ENCODE measurements at regions of chr15 and their contacts with region 1.

Region 1: DNA sequence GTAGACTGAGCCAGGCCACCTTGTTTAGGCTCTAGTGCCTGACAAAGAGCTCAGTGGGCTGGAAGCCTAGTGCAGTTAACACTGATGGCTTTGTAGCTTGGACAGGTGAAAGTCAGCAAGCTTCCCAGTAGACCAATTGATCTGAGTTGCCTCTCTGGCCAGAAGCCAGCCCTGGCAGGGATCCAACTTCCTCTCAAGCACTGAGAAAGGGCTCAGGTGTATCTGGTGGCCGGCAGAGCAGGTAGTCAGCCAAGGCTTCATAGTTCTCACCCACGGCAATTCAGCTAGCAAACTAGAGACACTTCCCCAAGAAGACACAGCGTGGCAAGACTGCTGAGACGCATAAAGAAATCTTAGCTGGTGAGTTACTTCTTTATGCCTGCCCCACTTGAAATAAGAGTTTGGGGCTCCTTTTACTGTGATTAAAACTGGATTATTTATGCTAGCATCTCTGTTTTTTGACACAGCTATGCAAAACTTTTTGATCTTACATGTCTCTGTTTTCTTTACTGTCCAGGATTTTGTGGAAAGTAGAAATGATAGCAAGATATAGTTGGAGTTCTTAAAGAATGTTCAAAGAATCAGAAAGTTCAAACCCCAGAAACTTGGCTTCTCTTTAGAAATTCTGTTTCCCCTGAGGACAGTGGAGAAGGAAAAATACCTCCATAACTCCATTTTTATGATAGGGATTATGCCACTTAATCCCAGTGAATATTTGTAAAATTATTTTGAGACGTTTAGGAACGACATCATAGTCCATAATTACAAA is 8.4 kb upstream of the CA12 start:
- ATAC-seq: peak in 2 of 8 experiments; percentile 28 to 76
- H3K4me3 ChIP-seq: no peak overlapping the region
- H3K27ac ChIP-seq: no peak overlapping the region
- H3K4me1 ChIP-seq: no peaks in the 10 kb centered on the region

Region 2: DNA sequence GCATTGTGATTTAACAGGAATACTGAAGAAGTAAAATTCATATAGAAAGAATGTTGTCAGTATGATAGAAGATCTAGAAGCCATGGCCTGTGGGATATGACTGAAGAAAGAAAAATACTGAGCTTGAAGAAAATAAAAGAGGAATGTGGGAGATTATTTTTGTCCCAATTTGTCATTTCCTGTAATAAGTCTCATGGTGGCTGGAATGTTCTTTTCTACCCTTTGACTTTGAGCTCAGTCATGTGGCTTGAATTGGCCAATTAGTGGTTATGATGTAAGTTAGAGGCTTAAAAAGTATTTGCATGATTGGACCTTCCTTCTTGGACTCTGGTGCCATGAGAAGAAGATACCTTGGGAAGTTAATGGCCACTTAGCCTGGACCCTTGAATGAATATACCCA is 98.6 kb before region 1 on chr15:
- in situ Hi-C with region 1: loop called in 2 of 9 experiments (anchors 10 kb)
- ATAC-seq: peak in 1 of 8 experiments; percentile 58
- H3K4me3 ChIP-seq: no peak overlapping the region
- H3K27ac ChIP-seq: no peak overlapping the region
- H3K4me1 ChIP-seq: peaks cover 2 to 6% of the 10 kb centered on the region in 2 donors

Region 3: DNA sequence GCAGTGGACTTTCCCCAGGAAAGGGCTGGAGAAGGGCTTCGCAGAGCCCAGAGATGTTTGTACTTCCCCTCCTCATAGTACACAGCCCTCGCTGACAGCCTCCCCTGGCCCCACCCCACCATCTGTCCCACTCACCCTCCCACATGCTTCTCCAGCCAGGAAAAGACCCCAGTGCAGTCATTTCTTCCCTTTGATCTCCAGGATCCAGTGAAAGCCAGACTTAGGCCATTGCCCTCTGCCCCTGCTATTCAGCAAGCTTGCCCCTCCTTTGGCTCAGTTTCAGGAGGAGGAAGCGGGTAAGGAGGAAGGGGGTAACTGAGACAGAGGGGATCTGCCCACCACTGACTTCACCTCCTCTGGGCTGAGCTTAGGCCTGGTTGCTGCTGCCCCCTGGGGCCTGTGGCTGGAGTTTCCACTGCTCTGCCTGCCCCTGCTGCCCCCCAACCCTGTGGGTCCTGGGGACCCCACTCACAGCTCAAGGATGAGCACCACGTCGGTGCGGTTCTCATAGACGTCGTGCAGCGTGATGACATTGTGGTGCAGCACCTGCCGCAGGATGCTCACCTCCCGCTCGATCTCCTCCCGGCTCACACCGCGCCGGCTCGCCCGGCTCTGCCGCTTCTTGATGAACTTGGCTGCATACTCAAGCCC is 593.1 kb after region 1 on chr15:
- in situ Hi-C with region 1: no loop called
- ATAC-seq: peak in 4 of 8 experiments; percentile 30 to 89 (median 74)
- H3K4me3 ChIP-seq: no peak overlapping the region
- H3K27ac ChIP-seq: no peak overlapping the region
- H3K4me1 ChIP-seq: peaks cover 2 to 7% of the 10 kb centered on the region in 2 donors

Measured in motor neuron (in vitro differentiated cells).